ENCODE measurements at regions of chr5 and their contacts with region 1.

Region 1: DNA sequence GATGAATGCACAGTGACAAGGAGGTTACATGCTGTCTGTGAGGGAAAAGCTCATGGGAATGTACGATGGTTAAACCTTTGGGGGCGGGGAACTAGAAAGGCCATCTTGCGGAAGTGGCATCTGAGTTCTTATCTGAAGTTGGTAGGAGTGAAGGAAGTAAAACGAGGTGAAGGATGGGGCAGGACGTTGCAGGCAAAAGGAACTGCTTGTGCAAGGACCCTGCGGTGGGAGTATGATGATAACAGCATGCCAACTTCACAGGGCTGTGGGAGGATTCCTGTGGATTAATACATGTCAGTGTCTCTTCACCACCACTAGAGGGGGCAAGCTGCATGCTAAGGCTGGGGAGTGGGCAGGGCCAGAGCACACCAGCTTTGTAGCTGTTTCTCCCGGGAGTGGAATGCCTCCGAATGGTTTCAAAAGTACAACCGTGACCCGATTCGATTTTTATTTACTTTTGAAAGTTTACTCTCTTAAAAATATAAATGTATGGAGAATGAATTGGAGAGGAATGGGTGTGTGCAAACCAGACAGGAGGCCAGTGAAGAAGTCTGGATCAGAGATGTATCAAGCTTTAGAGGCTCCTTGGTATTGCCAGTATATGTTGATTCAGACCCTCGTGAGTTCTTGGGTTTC is 62.5 kb downstream of the CYFIP2 start:
- DNase-seq: peak; percentile 77
- ATAC-seq: peak; percentile 97
- H3K4me3 Mint-ChIP-seq: peak overlapping the region; percentile 9
- H3K27ac Mint-ChIP-seq: peak overlapping the region; percentile 85
- H3K4me1 Mint-ChIP-seq: peaks cover 50% of the 10 kb centered on the region
- H3K27me3 Mint-ChIP-seq: no peaks in the 10 kb centered on the region

Region 2: DNA sequence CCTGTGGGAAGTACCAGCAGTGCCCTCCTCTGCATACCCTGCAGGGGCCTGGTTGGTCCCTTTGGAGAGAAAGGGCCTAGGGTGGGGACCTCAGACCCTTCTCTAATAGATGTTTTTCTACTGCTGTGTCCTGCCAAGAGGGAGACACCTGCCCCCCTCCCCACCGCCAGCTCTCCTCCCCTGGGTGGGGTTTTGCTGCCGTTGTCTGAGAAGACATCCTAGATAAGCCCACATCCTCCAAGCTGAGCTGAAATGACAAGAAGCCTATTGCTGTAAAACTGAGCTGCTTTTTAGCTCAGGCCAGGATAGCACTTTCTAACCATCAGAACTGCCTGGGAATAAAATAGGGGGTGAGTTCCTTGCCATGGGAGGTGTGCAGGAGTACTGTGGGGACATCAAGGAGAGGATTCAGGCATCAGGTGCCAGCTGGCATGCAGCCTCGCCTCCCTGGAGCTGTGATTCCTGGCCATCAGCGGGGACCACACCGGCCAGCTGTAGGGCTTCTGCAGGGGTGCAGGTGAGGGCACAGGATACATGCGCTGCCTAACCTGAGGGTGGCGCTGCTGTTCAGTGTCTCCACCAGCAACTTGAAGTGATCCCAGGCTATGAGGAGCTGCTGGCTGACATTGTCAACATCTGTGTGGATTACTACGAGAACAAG is 24.6 kb before region 1 on chr5:
- CTCF ChIA-PET with region 1: interaction called, 21 read pairs
- POLR2A ChIA-PET with region 1: no interaction called
- intact Hi-C with region 1: no loop called
- DNase-seq: peak; percentile 76
- ATAC-seq: peak; percentile 68
- H3K4me3 Mint-ChIP-seq: no peak overlapping the region
- H3K27ac Mint-ChIP-seq: peak overlapping the region; percentile 64
- H3K4me1 Mint-ChIP-seq: peaks cover 75% of the 10 kb centered on the region
- H3K27me3 Mint-ChIP-seq: no peaks in the 10 kb centered on the region

Region 3: DNA sequence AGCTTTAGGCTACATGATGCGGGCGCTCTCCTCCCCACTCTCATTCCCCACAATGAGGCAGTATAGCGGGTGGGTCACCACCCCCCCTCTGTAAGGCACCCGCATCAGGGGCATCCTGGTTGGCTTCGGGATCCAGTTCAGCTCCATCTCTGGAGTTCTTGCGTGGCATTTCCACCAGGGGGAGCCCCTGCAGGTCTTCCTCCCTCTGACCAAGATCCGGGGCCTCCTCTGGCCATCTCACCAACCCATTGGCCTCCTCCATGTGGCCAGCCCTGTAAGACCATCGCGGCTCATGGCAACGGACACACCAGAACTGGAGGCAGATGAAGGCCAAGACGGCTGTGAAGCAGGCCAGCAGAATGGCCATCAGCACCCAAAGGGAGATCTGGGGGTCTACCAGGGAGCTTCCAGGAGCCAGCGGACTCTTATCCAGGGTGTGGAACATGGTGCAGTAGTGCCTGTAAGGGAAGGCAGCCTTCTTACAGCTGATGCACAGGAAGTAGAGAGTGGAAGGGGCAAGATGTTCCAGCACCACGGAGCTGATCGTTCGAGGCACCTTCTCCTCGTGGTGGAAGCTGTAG is 14.5 kb after region 1 on chr5:
- CTCF ChIA-PET with region 1: interaction called, 117 read pairs
- POLR2A ChIA-PET with region 1: interaction called, 5 read pairs
- intact Hi-C with region 1: no loop called
- DNase-seq: peak; percentile 62
- ATAC-seq: peak; percentile 23
- H3K4me3 Mint-ChIP-seq: no peak overlapping the region
- H3K27ac Mint-ChIP-seq: peak overlapping the region; percentile 80
- H3K4me1 Mint-ChIP-seq: peaks cover 40% of the 10 kb centered on the region
- H3K27me3 Mint-ChIP-seq: no peaks in the 10 kb centered on the region

Region 4: GRCh38 chr5:157370967-157371366 is 42.6 kb after region 1 on chr5:
- CTCF ChIA-PET with region 1: interaction called, 18 read pairs
- POLR2A ChIA-PET with region 1: no interaction called
- intact Hi-C with region 1: no loop called
- DNase-seq: no peak
- ATAC-seq: no peak
- H3K4me3 Mint-ChIP-seq: no peak overlapping the region
- H3K27ac Mint-ChIP-seq: peak overlapping the region; percentile 71
- H3K4me1 Mint-ChIP-seq: peaks cover 16% of the 10 kb centered on the region
- H3K27me3 Mint-ChIP-seq: no peaks in the 10 kb centered on the region

Region 5: GRCh38 chr5:157471709-157472108 is 143.3 kb after region 1 on chr5:
- CTCF ChIA-PET with region 1: interaction called, 15 read pairs
- POLR2A ChIA-PET with region 1: no interaction called
- intact Hi-C with region 1: no loop called
- DNase-seq: peak; percentile 49
- ATAC-seq: peak; percentile 58
- H3K4me3 Mint-ChIP-seq: no peak overlapping the region
- H3K27ac Mint-ChIP-seq: no peak overlapping the region
- H3K4me1 Mint-ChIP-seq: no peaks in the 10 kb centered on the region
- H3K27me3 Mint-ChIP-seq: no peaks in the 10 kb centered on the region